ENCODE measurements at regions of chr2 and their contacts with region 1.

Region 1: DNA sequence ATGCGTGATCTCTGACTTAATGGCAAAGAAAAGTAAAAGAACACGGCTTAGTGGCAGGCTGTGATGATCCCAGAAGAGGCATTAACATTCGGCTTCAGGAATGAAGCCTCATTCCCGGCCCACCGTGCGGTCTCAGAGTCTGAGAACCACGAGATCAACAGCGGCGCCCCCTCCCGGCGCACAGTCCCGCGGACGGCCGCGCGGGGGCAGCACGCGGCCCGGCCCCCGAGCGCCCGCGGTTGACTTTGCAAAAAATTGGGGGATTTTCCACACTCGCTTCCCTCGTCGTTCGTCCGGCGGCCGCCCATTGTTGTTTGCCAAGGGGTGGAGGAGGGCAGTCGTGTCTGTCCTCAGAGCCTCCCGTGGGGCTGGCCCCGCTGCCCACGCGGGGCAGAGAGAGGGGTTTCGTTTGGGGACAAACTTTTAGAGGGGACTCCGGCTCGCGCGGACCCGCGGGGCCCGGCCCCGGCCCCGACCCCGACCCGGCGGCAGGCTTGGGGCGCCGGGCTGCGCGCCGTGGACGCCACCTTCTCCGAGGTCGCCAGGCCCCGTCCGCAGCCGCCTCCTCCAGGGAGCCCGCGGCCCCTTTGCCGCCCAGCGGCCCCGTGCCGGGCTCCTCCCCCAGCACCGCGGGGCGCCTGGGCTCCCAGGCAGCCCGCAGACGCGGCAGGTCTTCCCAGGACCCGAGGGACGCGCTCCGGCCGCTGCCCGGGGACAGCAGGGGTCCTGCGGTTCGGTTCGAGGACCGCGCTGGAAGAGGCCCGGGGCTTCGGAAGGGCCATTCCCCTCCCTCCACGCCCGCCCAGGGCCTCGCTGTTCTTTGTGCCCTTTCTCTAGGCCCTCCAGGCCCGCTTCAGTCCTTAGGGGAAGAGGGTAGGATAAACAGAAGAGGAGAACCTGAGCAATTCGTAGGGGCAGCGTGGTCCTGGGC is 3.4 kb upstream of the HS6ST1 start:
- DNase-seq: peak; percentile 84
- H3K4me3 ChIP-seq: peak overlapping the region; percentile 45 to 51 (median 46)
- H3K27ac ChIP-seq: peak overlapping the region; percentile 48
- H3K4me1 ChIP-seq: peaks cover 10% of the 10 kb centered on the region
- H3K27me3 ChIP-seq: no peaks in the 10 kb centered on the region
- CTCF ChIP-seq: peak; percentile 73 to 99
- POLR2A ChIP-seq: peak; percentile 71

Region 2: GRCh38 chr2:128178650-128179460 is 143.2 kb before region 1 on chr2:
- CTCF ChIA-PET with region 1: interaction called, 16 read pairs
- POLR2A ChIA-PET with region 1: no interaction called
- dilution Hi-C with region 1: no loop called
- intact Hi-C with region 1: loop called (anchors 1 kb)
- DNase-seq: peak; percentile 74
- H3K4me3 ChIP-seq: no peak overlapping the region
- H3K27ac ChIP-seq: peak overlapping the region; percentile 48
- H3K4me1 ChIP-seq: peaks cover 23% of the 10 kb centered on the region
- H3K27me3 ChIP-seq: no peaks in the 10 kb centered on the region
- CTCF ChIP-seq: peak; percentile 82 to 93
- POLR2A ChIP-seq: no peak

Region 3: GRCh38 chr2:128250229-128251025 is 71.6 kb before region 1 on chr2:
- CTCF ChIA-PET with region 1: no interaction called
- POLR2A ChIA-PET with region 1: no interaction called
- dilution Hi-C with region 1: no loop called
- intact Hi-C with region 1: no loop called
- DNase-seq: no peak
- H3K4me3 ChIP-seq: no peak overlapping the region
- H3K27ac ChIP-seq: no peak overlapping the region
- H3K4me1 ChIP-seq: no peaks in the 10 kb centered on the region
- H3K27me3 ChIP-seq: peaks cover 2 to 4% of the 10 kb centered on the region in 2 experiments
- CTCF ChIP-seq: no peak
- POLR2A ChIP-seq: no peak

Region 4: GRCh38 chr2:128306088-128306930 is 15.7 kb before region 1 on chr2:
- CTCF ChIA-PET with region 1: no interaction called
- POLR2A ChIA-PET with region 1: no interaction called
- dilution Hi-C with region 1: no loop called
- intact Hi-C with region 1: no loop called
- DNase-seq: no peak
- H3K4me3 ChIP-seq: no peak overlapping the region
- H3K27ac ChIP-seq: no peak overlapping the region
- H3K4me1 ChIP-seq: peaks cover 4% of the 10 kb centered on the region
- H3K27me3 ChIP-seq: no peaks in the 10 kb centered on the region
- CTCF ChIP-seq: no peak
- POLR2A ChIP-seq: no peak

Region 5: GRCh38 chr2:128395640-128396499 is 73.8 kb after region 1 on chr2:
- CTCF ChIA-PET with region 1: interaction called, 3 read pairs
- POLR2A ChIA-PET with region 1: no interaction called
- dilution Hi-C with region 1: no loop called
- intact Hi-C with region 1: loop called (anchors 1 kb)
- DNase-seq: peak; percentile 59
- H3K4me3 ChIP-seq: no peak overlapping the region
- H3K27ac ChIP-seq: peak overlapping the region; percentile 24
- H3K4me1 ChIP-seq: peaks cover 14% of the 10 kb centered on the region
- H3K27me3 ChIP-seq: no peaks in the 10 kb centered on the region
- CTCF ChIP-seq: no peak
- POLR2A ChIP-seq: peak; percentile 28

Region 6: DNA sequence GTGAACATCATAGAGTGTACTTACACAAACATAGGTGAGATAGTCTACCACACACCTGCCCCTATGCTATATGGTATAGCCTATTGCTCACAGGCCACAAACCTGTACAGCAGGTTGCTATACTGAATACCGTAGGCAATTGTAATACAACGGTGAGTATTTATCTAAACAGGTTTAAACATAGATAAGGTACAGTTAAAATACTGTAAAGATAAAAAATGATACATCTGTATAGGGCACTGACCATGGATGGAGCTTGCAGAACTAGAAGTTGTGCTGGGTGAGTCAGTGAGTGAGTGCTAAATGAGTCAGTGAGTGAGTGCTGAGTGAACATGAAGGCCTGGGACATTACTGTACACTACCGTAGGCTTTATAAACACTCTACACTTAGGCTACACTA is 263.7 kb after region 1 on chr2:
- CTCF ChIA-PET with region 1: no interaction called
- POLR2A ChIA-PET with region 1: no interaction called
- dilution Hi-C with region 1: no loop called
- intact Hi-C with region 1: loop called (anchors 10 kb)
- DNase-seq: no peak
- H3K4me3 ChIP-seq: no peak overlapping the region
- H3K27ac ChIP-seq: no peak overlapping the region
- H3K4me1 ChIP-seq: no peaks in the 10 kb centered on the region
- H3K27me3 ChIP-seq: no peaks in the 10 kb centered on the region
- CTCF ChIP-seq: no peak
- POLR2A ChIP-seq: no peak

Region 7: DNA sequence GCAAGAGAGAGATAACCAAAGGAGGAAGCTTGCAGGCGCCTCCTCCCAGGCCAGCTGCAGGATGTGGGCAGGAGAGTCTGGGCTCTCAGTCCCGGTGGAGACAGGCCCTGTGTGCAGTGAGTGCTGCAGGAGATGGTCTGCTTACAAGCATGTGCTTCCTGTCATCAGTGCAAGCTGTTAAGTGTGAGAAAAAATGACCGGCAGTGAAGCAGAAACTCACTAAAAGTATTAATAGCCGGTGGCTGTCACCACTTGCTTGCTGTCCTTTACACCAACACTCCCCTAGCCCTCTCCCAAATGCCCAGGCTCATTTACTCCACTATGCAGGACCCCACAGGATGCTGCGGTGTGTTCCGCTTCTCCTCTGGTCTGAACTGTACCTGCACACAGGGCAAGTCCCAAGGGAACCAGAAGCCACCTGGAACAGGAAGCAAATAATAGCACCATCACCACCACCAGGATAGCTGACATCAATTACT is 432.2 kb after region 1 on chr2:
- CTCF ChIA-PET with region 1: no interaction called
- POLR2A ChIA-PET with region 1: no interaction called
- dilution Hi-C with region 1: no loop called
- intact Hi-C with region 1: loop called (anchors 1 kb)
- DNase-seq: no peak
- H3K4me3 ChIP-seq: no peak overlapping the region
- H3K27ac ChIP-seq: no peak overlapping the region
- H3K4me1 ChIP-seq: no peaks in the 10 kb centered on the region
- H3K27me3 ChIP-seq: no peaks in the 10 kb centered on the region
- CTCF ChIP-seq: no peak
- POLR2A ChIP-seq: no peak

Region 8: GRCh38 chr2:128765811-128766210 is 443.8 kb after region 1 on chr2:
- CTCF ChIA-PET with region 1: no interaction called
- POLR2A ChIA-PET with region 1: no interaction called
- dilution Hi-C with region 1: no loop called
- intact Hi-C with region 1: no loop called
- DNase-seq: no peak
- H3K4me3 ChIP-seq: no peak overlapping the region
- H3K27ac ChIP-seq: no peak overlapping the region
- H3K4me1 ChIP-seq: no peaks in the 10 kb centered on the region
- H3K27me3 ChIP-seq: no peaks in the 10 kb centered on the region
- CTCF ChIP-seq: no peak
- POLR2A ChIP-seq: no peak